AG04449 (cell line): ENCODE measurements at regions of chr18 and their contacts with region 1.

Region 1: DNA sequence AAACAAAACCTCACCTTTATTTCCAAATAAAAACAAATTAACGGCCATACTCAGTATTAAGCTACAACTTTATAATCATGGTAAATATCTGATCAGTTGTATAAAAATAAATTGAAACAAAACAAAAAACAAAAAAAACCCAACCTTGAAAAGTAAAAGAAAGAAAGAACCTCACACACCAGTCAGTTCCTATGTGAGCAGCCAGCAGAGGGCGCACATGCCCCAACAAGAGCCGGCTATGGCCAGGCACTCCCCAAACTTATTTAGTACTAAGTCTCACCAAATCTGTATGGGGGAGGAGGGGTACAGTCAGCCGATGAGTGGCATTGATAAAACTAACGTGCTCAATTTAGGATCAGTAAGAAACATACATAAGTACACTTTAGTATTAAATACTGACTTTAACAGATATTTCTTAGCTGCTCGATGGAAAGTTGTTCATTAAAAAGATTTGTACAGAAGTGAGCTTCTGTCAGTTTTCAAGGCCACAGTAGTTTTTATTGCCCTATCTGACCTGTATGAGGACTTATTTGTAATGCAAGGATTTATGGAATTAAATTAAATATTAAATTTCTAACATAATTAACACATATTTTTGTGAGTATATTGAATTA is 172.6 kb downstream of the TCF4 start:
- DNase-seq: no peak
- H3K4me3 ChIP-seq: no peak overlapping the region
- CTCF ChIP-seq: peak; percentile 78

Region 2: GRCh38 chr18:55079481-55080355 is 335.6 kb before region 1 on chr18:
- CTCF ChIA-PET with region 1: no interaction called
- POLR2A ChIA-PET with region 1: no interaction called
- DNase-seq: no peak
- H3K4me3 ChIP-seq: no peak overlapping the region
- CTCF ChIP-seq: no peak

Region 3: GRCh38 chr18:55384551-55385275 is 30.7 kb before region 1 on chr18:
- CTCF ChIA-PET with region 1: no interaction called
- POLR2A ChIA-PET with region 1: no interaction called
- DNase-seq: no peak
- H3K4me3 ChIP-seq: no peak overlapping the region
- CTCF ChIP-seq: peak; percentile 56

Region 4: GRCh38 chr18:55425698-55426097 is 10.3 kb after region 1 on chr18:
- CTCF ChIA-PET with region 1: interaction called, 21 read pairs
- POLR2A ChIA-PET with region 1: no interaction called
- DNase-seq: no peak
- H3K4me3 ChIP-seq: no peak overlapping the region
- CTCF ChIP-seq: no peak

Region 5: DNA sequence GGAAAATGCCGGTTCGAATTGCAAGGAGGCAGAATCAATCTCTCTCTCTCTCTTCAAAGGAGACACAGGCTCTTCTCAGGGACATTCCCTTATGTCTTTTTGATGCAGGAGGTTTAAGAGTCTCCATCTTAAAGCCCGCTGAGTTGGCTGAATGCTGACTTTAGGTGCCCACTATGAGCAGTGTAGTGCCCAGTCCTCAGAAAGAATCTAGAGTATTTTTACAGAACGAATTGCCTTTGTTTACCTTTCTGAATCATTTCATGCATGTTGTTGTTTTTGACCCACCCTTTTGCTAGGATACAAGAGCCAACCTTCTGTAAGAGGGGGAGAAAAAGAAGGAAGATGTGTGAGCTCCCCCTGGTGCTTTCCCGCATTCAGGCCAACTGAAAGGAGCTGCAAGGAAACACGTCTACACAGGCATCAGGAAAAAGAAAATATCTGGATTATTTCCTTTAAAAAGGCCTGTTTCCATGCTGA is 366.2 kb after region 1 on chr18:
- CTCF ChIA-PET with region 1: interaction called, 23 read pairs
- POLR2A ChIA-PET with region 1: no interaction called
- DNase-seq: peak; percentile 14
- H3K4me3 ChIP-seq: no peak overlapping the region
- CTCF ChIP-seq: peak; percentile 75